Uterus (tissue), 4 donors: ENCODE measurements at regions of chr6 and their contacts with region 1.

Region 1: DNA sequence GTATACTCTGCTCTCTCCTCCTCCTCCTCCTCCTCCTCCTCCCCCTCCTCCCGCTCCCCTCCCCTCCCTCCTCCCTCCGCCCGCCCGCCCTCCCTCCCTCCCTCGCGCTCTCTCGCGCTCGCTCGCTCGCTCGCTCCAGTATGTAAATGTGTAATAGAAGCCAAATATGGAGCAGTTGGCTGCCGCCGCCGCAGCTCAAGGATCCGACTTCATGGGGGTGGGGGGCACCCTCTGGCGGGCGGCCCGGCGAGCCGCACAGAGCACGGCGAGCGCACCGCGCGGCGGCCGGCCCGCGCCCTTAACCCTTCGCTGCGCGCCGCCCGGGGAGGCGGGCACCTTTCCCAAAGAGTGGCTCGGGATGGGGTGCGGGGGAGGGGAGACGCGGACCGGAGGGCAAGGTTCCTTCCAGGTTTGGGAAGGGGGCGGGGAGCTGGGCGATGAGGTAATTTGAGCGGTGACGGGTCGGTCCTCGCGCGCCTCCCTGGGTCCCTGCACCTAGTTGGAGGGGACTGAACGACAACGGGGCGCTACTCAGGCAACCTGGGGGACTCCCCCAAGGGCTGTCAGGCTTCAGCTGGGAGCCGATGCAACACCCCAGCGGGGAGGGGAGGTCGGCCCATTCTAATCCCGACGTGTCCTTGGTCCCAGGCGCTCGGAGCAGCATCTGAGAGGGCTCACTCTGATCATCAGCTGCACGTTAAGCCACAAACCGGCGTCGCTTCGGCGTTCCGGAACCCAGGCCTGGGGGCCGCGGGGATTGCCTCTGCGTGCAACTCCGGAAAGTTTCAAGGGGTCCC is 409 bp upstream of the ATXN1 start:
- DNase-seq: peak; percentile 87 to 92
- H3K4me3 ChIP-seq: peak overlapping the region; percentile 86 to 97
- H3K27ac ChIP-seq: peak overlapping the region; percentile 98 to 100
- H3K4me1 ChIP-seq: no peaks in the 10 kb centered on the region
- H3K27me3 ChIP-seq: no peaks in the 10 kb centered on the region
- CTCF ChIP-seq: peak in 3 of 4 experiments; percentile 5 to 59 (median 50)
- POLR2A ChIP-seq: peak in 1 of 2 donors; percentile 57

Region 2: DNA sequence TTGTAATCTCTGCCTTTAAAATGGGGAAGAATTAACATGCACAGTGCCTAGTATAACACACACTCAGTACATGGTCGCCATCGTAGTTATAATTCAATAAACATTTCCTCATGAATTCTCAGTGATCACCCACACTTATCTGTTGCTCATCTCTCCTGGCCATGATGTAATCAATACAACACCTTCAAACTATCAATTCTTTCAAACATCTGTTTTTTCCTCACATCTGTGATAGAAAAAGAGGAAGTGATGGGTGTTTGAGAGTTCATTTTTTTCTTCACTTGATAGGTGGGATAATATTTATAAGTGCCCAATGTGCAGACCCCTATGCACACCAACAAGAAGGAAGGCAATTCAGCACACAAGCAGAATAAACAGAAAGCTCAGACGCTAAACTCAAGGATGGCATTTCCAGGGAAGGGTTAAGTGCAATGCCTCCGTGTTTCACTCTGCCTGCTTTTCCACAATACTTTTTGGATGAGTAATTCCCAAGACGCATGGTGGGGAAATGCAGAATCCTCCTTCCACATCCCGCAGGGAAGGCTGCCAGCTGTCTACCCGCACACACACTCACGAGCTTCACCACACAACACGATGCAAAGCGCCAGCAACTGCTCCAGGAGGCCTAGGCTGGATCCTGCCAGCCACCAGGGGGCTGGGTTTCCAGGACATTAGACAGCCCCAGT is 422.9 kb before region 1 on chr6:
- intact Hi-C with region 1: loop called (anchors 5 kb)
- DNase-seq: peak; percentile 89 to 93
- H3K4me3 ChIP-seq: no peak overlapping the region
- H3K27ac ChIP-seq: peak overlapping the region; percentile 72 to 78
- H3K4me1 ChIP-seq: peaks cover 17 to 35% of the 10 kb centered on the region in 2 donors
- H3K27me3 ChIP-seq: no peaks in the 10 kb centered on the region
- CTCF ChIP-seq: peak; percentile 49 to 66 (median 52)
- POLR2A ChIP-seq: no peak

Region 3: DNA sequence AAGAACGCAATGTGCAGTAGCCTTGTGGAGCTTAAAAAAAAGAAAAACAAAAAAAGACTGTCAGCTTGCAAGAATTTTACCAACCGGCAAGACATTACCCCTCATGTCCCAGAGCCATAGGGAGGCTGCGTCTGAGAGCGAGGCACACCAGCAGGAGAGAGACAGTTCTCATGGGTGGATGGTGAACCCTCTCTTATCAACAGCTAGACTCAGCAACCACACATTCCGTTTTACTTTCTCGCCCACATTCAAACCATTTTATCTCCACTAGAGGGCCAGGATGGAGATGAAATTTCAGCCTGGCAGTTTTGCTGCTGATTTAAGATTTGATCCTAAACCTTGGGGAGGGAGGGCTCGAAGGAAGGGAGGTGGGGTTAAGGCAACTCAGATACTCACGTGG is 247.4 kb before region 1 on chr6:
- intact Hi-C with region 1: loop called (anchors 10 kb)
- DNase-seq: no peak
- H3K4me3 ChIP-seq: no peak overlapping the region
- H3K27ac ChIP-seq: peak overlapping the region; percentile 40 to 62
- H3K4me1 ChIP-seq: peaks cover 0 to 7% of the 10 kb centered on the region in 2 donors
- H3K27me3 ChIP-seq: no peaks in the 10 kb centered on the region
- CTCF ChIP-seq: peak; percentile 50 to 56 (median 53)
- POLR2A ChIP-seq: no peak

Region 4: DNA sequence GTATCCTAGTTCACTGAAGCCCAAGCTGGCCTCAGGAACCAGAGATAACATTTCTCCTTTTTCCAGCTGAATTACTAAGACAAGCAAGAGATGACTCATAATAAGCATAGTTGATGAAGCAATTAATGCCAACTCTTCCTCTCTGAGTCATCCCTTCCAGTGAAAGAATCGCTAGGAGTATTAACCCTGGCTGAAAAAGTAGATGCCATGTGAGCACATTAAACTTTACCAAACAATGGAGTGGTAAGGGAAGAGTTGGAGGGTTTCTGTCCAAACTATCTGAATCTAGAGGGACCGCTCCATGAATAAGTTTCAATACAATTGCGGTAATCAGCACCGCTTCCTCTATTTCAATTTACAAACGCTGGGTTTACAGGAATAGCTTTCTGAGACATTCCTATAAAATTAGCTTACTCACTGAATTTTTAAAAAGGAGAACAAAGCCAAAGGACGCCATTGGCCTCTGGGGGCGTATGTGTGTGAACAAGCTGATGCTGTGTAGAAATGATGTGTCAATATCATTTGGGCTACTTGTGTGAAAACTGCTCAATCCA is 48.7 kb before region 1 on chr6:
- intact Hi-C with region 1: loop called (anchors 5 kb)
- DNase-seq: peak; percentile 39 to 56
- H3K4me3 ChIP-seq: peak overlapping the region; percentile 7 to 9
- H3K27ac ChIP-seq: peak overlapping the region; percentile 83 to 91
- H3K4me1 ChIP-seq: peaks cover 0 to 3% of the 10 kb centered on the region in 2 donors
- H3K27me3 ChIP-seq: no peaks in the 10 kb centered on the region
- CTCF ChIP-seq: peak in 1 of 4 experiments; percentile 19
- POLR2A ChIP-seq: no peak

Region 5: DNA sequence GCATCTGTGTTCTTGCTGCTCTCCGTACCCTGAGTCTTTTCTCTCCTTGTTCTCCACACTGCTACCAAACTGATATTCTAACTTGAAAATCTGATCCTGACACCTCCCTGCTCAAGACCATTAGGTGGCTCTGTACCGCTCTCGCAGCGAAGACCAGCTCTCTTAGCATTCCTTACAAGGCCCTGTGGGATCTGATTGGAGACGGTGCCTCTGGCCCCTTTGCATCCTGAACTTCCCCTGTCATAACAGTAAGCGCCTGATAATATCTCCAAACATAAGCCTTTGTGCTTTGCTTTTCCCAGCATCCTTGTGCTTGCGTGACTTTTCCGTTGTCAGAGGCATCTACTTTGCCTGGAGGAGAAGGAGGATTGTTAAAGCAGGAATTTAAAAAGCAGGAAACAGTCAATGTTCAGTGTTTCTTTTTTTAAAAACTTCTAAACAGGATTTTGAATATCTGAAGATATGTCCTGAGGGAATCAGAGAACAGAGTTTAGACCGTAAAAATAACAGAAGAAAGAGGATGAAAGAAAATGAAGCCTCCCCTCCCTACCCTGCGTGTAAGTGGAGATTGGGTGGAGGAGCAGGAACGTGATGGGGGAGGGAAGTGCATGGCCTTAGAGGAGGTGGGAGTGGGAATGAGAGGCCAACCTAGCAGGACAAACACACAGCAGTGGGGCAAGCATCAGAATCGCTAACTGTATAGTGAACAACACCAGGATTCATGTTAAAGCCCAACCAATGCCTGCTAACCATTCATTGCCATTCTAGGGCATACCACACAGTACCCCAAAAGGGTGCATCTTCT is 251.0 kb after region 1 on chr6:
- intact Hi-C with region 1: no loop called
- DNase-seq: peak; percentile 27 to 57
- H3K4me3 ChIP-seq: no peak overlapping the region
- H3K27ac ChIP-seq: peak overlapping the region; percentile 21 to 56
- H3K4me1 ChIP-seq: no peaks in the 10 kb centered on the region
- H3K27me3 ChIP-seq: no peaks in the 10 kb centered on the region
- CTCF ChIP-seq: peak; percentile 9 to 22 (median 18)
- POLR2A ChIP-seq: no peak